Aorta (tissue), 5 donors: ENCODE measurements at regions of chr14 and their contacts with region 1.

Region 1: GRCh38 chr14:96053600-96054381 is 14.6 kb downstream of the C14orf132 start:
- DNase-seq: peak; percentile 89 to 92
- ATAC-seq: peak; percentile 92
- H3K4me3 ChIP-seq: no peak overlapping the region
- H3K27ac ChIP-seq: peak overlapping the region; percentile 73 to 95
- H3K4me1 ChIP-seq: peaks cover 2 to 4% of the 10 kb centered on the region in 2 donors
- H3K27me3 ChIP-seq: no peaks in the 10 kb centered on the region

Region 2: GRCh38 chr14:96038920-96039632 is 14.7 kb before region 1 on chr14 and contains the start of gene C14orf132:
- intact Hi-C with region 1: loop called in 1 of 2 experiments (anchors 2 kb)
- DNase-seq: peak; percentile 83 to 94
- ATAC-seq: peak; percentile 93
- H3K4me3 ChIP-seq: peak within 1 kb of the TSS; percentile 42 to 84
- H3K27ac ChIP-seq: peak within 1 kb of the TSS; percentile 61 to 69
- H3K4me1 ChIP-seq: peaks cover 0 to 4% of the 10 kb centered on the region in 2 donors
- H3K27me3 ChIP-seq: no peaks in the 10 kb centered on the region
- total RNA-seq, gene C14orf132: 38.2 to 39.1 TPM

Region 3: DNA sequence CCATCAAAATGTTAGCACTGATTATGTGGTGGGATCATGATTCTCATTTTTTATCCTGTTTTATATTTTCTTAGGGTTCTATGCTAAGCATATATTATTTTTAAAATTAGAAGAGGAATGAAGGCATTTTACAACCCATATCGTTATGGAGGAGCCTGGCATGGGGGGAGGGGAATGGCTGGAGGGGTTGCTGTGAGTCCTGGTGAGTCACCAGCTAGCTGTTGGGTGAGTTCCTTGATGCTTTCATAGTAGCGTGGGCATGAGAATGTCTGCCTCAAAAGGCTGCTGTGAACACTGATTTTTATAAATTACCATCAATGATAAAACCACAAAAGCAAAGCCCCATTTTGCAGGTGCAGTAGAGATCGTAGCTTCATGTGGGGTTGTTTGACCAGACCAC is 32.2 kb after region 1 on chr14:
- intact Hi-C with region 1: loop called in 1 of 2 experiments (anchors 5 kb)
- DNase-seq: peak in 1 of 2 donors; percentile 67
- ATAC-seq: no peak
- H3K4me3 ChIP-seq: no peak overlapping the region
- H3K27ac ChIP-seq: no peak overlapping the region
- H3K4me1 ChIP-seq: no peaks in the 10 kb centered on the region
- H3K27me3 ChIP-seq: no peaks in the 10 kb centered on the region